PC-3 (cell line): ENCODE measurements at regions of chr15 and their contacts with region 1.

Region 1: GRCh38 chr15:49847937-49848823 is 227.3 kb downstream of the DTWD1 start:
- DNase-seq: peak; percentile 95
- ATAC-seq: peak; percentile 84
- H3K4me3 ChIP-seq: peak overlapping the region; percentile 13; the same call in 1 of the 2 replicates
- H3K27ac ChIP-seq: peak overlapping the region; percentile 97
- H3K4me1 ChIP-seq: peaks cover 28% of the 10 kb centered on the region
- H3K27me3 ChIP-seq: no peaks in the 10 kb centered on the region
- CTCF ChIP-seq: no peak

Region 2: GRCh38 chr15:49492824-49493223 is 355.4 kb before region 1 on chr15:
- CTCF ChIA-PET with region 1: no interaction called
- POLR2A ChIA-PET with region 1: no interaction called
- intact Hi-C with region 1: loop called (anchors 10 kb)
- DNase-seq: peak; percentile 31
- ATAC-seq: no peak
- H3K4me3 ChIP-seq: no peak overlapping the region
- H3K27ac ChIP-seq: no peak overlapping the region
- H3K4me1 ChIP-seq: peaks cover 34% of the 10 kb centered on the region
- H3K27me3 ChIP-seq: no peaks in the 10 kb centered on the region
- CTCF ChIP-seq: no peak

Region 3: DNA sequence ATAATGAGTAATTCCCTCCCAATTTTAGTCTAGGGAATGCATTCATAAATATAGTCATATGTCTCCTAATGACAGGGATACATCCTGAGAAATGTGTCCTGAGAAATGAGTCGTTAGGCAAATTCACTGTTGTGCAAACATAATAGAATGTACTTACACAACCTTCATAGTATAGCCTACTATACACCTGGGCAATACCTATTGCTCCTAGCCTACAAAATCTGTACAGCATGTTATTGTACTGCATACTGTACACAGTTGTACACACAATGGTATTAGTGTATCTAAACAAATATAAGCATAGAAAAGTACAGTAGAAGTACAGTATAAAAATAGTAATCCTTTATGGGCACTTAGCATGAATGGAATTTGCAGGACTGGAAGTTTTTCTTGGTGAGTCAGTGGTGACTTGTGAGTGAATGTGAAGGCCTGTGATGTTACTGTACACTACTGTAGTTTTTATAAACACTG is 220.7 kb before region 1 on chr15:
- CTCF ChIA-PET with region 1: no interaction called
- POLR2A ChIA-PET with region 1: no interaction called
- intact Hi-C with region 1: loop called (anchors 5 kb)
- DNase-seq: peak; percentile 85
- ATAC-seq: peak; percentile 95
- H3K4me3 ChIP-seq: peak overlapping the region; percentile 9; the same call in 1 of the 2 replicates
- H3K27ac ChIP-seq: peak overlapping the region; percentile 90
- H3K4me1 ChIP-seq: peaks cover 20% of the 10 kb centered on the region
- H3K27me3 ChIP-seq: no peaks in the 10 kb centered on the region
- CTCF ChIP-seq: no peak

Region 4: DNA sequence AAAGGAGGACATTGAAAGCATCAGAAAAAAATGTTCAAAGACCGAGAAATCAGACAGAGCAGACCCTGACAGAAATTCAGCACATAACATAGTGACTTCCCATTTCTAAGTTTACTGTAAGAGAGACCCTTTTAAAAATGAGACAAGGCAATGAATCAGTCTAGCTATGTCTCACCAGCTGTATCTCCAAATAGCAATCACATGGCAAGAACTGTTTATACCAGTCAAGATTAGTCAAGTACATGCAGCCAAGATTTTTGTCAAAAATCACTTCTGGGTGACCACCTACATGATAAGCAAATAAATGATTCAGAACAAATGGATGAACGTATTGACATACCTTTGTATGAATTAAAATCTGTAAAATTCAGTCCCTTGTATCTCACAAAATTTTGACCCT is 89.3 kb before region 1 on chr15:
- CTCF ChIA-PET with region 1: no interaction called
- POLR2A ChIA-PET with region 1: no interaction called
- intact Hi-C with region 1: no loop called
- DNase-seq: peak; percentile 43
- ATAC-seq: peak; percentile 18; the same call in 1 of the 2 replicates
- H3K4me3 ChIP-seq: no peak overlapping the region
- H3K27ac ChIP-seq: no peak overlapping the region
- H3K4me1 ChIP-seq: no peaks in the 10 kb centered on the region
- H3K27me3 ChIP-seq: no peaks in the 10 kb centered on the region
- CTCF ChIP-seq: no peak

Region 5: DNA sequence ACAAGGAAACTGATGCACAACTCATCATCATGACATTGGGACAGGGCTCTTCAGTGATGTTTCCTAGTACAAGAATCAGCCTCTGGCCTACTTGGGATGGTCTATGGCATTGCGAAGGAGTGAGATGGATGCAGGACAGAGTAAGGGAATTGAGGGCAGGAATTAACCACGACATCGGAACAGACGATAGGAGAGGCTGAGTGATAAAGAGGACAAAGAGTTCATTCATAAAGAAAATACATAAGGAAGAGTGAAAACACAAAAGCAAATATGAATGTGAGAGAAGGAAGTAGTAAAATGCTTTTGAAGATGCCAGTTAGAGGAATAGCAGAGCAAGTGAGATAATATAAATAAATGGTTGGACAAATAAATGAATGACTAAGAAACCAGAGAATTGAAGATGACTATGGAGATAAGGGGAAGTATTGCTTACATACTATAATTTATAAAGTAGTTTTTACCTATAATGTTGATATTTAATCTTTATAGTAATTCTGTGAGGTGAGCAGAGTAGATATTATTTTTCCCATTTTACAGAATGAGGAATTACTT is 24.1 kb before region 1 on chr15:
- CTCF ChIA-PET with region 1: no interaction called
- POLR2A ChIA-PET with region 1: no interaction called
- intact Hi-C with region 1: loop called (anchors 1 kb)
- DNase-seq: peak; percentile 56
- ATAC-seq: peak; percentile 96
- H3K4me3 ChIP-seq: no peak overlapping the region
- H3K27ac ChIP-seq: peak overlapping the region; percentile 81
- H3K4me1 ChIP-seq: peaks cover 19% of the 10 kb centered on the region
- H3K27me3 ChIP-seq: no peaks in the 10 kb centered on the region
- CTCF ChIP-seq: no peak